Activated CD8-positive, alpha-beta memory T cell treated with anti-CD3 and anti-CD28 coated beads, Interleukin-2, amount 10 ng/mL, durations not matched to agents 7 days and 5 days (primary cell): ENCODE measurements at regions of chr1 and their contacts with region 1.

Region 1: DNA sequence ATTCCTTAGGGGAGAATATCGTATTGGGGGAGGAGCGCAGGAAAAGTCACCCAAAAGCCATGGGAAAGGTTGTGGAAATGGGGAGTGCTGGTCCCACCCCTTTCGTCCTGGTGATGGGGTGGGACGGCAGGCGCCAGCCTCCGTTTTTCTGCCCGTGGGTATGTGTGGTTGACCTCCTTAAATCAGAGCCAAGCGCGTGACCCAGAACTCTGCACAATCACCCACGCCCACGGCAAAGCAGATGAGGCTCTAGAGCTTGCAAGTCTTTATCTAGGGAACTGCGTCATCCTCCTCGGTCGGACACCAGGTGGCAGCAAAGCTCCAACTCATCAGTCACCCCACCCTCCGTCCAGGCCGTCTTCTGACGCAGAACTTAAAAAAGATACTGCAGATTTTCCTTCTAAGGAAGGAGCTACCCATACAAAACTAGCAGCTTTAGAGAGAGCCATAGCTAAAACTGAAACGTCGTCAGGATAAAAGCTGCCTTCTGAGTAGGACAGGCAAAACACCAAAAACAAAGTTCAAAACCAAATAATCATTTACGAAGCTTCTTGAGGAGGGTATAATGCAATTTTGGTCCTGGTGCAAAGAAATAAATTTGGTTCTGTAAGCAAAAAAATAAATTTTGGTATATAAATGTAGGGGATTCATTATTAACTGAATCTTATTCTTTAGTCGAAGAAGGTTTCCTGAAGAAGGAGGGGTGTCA is 62.0 kb downstream of the TBX19 start:
- DNase-seq: peak; percentile 94
- ATAC-seq: peak; percentile 93
- H3K4me3 Mint-ChIP-seq: no peak overlapping the region
- H3K27ac Mint-ChIP-seq: peak overlapping the region; percentile 87
- H3K4me1 Mint-ChIP-seq: peaks cover 75% of the 10 kb centered on the region
- H3K27me3 Mint-ChIP-seq: no peaks in the 10 kb centered on the region

Region 2: GRCh38 chr1:168234846-168235547 is 107.7 kb before region 1 on chr1:
- CTCF ChIA-PET with region 1: interaction called, 50 read pairs
- DNase-seq: peak; percentile 73
- ATAC-seq: peak; percentile 86
- H3K4me3 Mint-ChIP-seq: no peak overlapping the region
- H3K27ac Mint-ChIP-seq: peak overlapping the region; percentile 77
- H3K4me1 Mint-ChIP-seq: peaks cover 52% of the 10 kb centered on the region
- H3K27me3 Mint-ChIP-seq: no peaks in the 10 kb centered on the region

Region 3: GRCh38 chr1:168259567-168259966 is 83.2 kb before region 1 on chr1:
- CTCF ChIA-PET with region 1: no interaction called
- DNase-seq: no peak
- ATAC-seq: no peak
- H3K4me3 Mint-ChIP-seq: no peak overlapping the region
- H3K27ac Mint-ChIP-seq: no peak overlapping the region
- H3K4me1 Mint-ChIP-seq: peaks cover 4% of the 10 kb centered on the region
- H3K27me3 Mint-ChIP-seq: no peaks in the 10 kb centered on the region

Region 4: DNA sequence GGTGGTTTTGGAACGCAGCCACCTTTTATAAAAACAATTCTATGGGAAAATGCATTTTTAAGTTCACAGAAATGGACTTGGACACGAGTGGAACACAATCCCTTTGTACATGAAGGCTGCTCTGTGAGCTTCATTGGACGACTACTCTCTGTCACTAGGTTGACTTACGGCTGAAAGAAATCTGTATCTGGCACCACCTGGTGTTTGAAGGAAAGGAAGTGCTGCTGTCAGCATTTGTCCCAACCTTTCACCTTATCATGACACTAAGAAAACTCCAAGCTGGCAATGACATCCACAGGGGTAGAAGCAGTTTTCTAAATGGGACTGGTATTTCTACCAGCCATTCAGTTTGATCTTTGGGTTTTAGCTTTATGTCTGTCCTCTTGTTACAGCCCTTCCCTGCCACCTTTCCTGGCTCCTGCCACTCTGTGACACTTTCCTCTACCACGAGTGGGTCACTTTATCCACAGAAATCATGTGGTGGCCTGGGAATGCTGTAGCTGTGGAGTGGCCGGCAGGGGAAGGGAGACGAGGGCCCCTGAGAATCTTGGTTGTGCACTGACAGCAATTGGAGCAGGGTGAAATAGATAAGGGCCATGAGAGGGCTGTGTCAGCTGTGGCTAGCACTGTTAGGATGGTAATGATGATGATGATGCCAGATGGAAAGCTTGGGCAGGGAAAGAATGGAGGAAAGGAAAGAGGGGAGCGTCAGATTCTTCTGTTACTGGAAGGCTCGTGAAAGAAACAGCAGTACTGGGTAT is 23.2 kb after region 1 on chr1:
- CTCF ChIA-PET with region 1: interaction called, 254 read pairs
- DNase-seq: no peak
- ATAC-seq: no peak
- H3K4me3 Mint-ChIP-seq: no peak overlapping the region
- H3K27ac Mint-ChIP-seq: no peak overlapping the region
- H3K4me1 Mint-ChIP-seq: peaks cover 35% of the 10 kb centered on the region
- H3K27me3 Mint-ChIP-seq: no peaks in the 10 kb centered on the region

Region 5: GRCh38 chr1:168408536-168409242 is 66.0 kb after region 1 on chr1:
- CTCF ChIA-PET with region 1: interaction called, 25 read pairs
- DNase-seq: peak; percentile 82
- ATAC-seq: peak; percentile 91
- H3K4me3 Mint-ChIP-seq: peak overlapping the region; percentile 35
- H3K27ac Mint-ChIP-seq: peak overlapping the region; percentile 83
- H3K4me1 Mint-ChIP-seq: peaks cover 45% of the 10 kb centered on the region
- H3K27me3 Mint-ChIP-seq: no peaks in the 10 kb centered on the region

Region 6: GRCh38 chr1:168466092-168466713 is 123.5 kb after region 1 on chr1:
- CTCF ChIA-PET with region 1: interaction called, 16 read pairs
- DNase-seq: peak; percentile 78
- ATAC-seq: peak; percentile 67
- H3K4me3 Mint-ChIP-seq: no peak overlapping the region
- H3K27ac Mint-ChIP-seq: peak overlapping the region; percentile 84
- H3K4me1 Mint-ChIP-seq: peaks cover 68% of the 10 kb centered on the region
- H3K27me3 Mint-ChIP-seq: no peaks in the 10 kb centered on the region

Region 7: DNA sequence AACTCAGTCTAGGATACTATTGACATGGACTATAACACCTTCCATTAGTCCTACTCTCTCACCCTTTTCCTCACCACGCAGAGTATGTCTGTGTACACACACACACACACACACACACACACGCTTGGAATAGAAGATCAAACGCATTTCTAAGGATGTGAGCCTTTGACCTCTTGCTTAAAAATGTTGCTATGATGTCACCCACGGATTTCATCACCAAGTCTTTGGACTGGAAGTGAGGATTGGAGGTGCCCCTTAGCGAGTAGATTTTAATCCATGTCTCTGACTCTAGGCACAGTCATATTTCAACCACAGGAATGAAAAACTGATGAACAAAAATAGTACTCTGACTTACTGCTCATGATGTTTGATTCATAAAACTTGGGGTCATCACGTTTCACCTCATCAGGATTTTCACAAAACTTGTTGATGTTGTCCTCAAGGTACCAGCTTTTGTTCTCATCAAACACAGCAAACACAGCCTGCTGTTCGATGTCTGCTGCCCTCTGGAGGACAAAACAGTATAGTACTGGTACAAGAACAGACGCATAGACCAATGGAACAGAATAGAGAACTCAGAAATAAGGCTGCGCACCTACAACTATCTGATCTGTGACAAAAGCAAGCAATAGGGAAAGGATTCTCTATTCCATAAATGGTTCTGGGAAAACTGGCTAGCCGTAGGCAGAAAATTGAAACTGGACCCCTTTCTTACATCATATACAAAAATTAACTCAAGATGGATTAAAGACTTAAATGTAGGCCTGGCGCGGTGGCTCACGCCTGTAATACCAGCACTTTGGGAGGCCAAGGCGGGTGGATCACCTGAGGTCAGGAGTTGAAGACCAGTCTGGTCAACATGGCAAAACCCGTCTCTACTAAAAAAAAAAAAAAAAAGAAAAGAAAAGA is 1203.6 kb after region 1 on chr1:
- CTCF ChIA-PET with region 1: interaction called, 12 read pairs
- DNase-seq: peak; percentile 66
- ATAC-seq: peak; percentile 83
- H3K4me3 Mint-ChIP-seq: no peak overlapping the region
- H3K27ac Mint-ChIP-seq: no peak overlapping the region
- H3K4me1 Mint-ChIP-seq: no peaks in the 10 kb centered on the region
- H3K27me3 Mint-ChIP-seq: no peaks in the 10 kb centered on the region